ENCODE measurements at regions of chr3 and their contacts with region 1.

Region 1: GRCh38 chr3:184561061-184561912 is at the start of gene EPHB3:
- DNase-seq: peak; percentile 98 to 99
- H3K4me3 ChIP-seq: peak within 1 kb of the TSS; percentile 80
- H3K4me3 Mint-ChIP-seq: peak within 1 kb of the TSS; percentile 47
- H3K27ac Mint-ChIP-seq: no peak within 1 kb of the TSS
- H3K4me1 ChIP-seq: peaks cover 19% of the 10 kb centered on the region
- H3K4me1 Mint-ChIP-seq: peaks cover 24% of the 10 kb centered on the region
- H3K27me3 ChIP-seq: peaks cover 1% of the 10 kb centered on the region; the same call in 1 of the 2 replicates
- H3K27me3 Mint-ChIP-seq: peaks cover 12% of the 10 kb centered on the region
- CTCF ChIP-seq: peak; percentile 97 to 100
- total RNA-seq, gene EPHB3: 5.6 and 6.9 TPM in 2 replicates

Region 2: DNA sequence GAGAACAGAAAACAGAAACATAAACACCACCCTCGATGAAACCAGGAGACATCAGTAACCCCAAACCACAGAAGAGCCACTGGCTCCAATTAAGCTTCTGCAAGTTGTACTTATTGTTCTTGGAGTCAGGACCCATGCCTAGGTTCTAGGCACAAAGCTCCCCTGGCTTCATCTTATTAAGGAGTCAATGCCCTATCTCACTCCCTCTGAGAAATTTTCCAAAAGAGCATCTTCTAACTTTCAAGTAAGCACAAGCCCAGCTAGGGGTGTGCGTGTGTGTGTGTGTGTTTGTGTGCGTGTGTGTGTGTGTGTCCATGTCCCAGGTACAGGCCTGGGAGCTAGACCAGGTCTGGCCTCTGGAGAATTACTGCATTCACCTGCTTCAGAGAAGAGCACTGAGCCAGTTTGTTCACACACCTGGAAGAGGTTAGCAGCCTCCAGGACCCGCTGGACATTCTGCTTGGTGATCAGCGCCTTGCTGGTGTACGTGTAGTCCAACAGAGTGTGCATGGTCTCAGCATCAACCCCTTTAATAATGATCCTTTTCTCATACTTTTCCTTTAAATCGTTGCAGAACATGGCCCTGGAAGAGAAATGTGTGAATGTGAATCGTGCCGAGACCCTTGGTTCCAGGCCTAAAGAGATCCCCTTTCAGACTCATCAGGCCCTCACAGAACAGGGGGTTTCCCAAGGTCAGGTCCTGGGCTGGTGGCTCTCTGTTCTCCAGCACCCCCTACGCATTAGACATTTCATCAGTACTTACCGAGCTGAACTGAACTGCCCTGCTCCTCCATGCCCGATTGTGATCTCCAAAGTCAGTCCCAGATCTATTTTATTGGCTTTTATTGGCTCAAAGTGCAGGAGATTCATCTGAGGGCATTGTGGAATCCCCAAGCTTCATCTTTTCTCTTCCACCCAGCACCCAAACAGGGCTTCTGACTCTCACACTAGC is 1033.6 kb before region 1 on chr3:
- CTCF ChIA-PET with region 1: no interaction called
- POLR2A ChIA-PET with region 1: no interaction called
- intact Hi-C with region 1: no loop called
- DNase-seq: no peak
- H3K4me3 ChIP-seq: no peak overlapping the region
- H3K4me3 Mint-ChIP-seq: no peak overlapping the region
- H3K27ac Mint-ChIP-seq: peak overlapping the region; percentile 53
- H3K4me1 ChIP-seq: peaks cover 4% of the 10 kb centered on the region
- H3K4me1 Mint-ChIP-seq: peaks cover 5% of the 10 kb centered on the region
- H3K27me3 ChIP-seq: no peaks in the 10 kb centered on the region
- H3K27me3 Mint-ChIP-seq: no peaks in the 10 kb centered on the region
- CTCF ChIP-seq: no peak

Region 3: DNA sequence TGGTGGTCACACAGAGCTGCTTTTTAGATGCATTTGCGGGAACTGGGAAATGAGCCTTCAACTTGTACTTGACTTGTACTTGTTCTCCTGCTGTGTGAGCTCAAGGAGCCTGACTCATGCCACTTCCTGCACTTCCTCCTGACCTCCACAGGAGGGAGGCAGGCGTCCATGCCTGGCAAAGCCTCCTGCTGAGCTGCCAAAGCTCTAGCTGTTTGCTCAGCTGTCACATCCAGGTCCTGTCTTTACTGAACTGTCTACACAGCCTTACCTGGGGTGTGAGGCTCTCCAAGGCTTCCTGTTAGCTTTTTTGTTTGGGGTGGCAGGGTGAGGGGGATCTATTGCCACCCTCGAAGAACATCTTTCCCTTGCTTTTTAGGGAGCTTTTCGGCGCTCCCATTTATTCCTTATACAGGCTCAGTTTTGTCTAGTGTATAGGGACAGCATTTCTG is 189.7 kb before region 1 on chr3:
- CTCF ChIA-PET with region 1: interaction called, 22 read pairs
- POLR2A ChIA-PET with region 1: interaction called, 4 read pairs
- intact Hi-C with region 1: no loop called
- DNase-seq: peak; percentile 85 to 88
- H3K4me3 ChIP-seq: no peak overlapping the region
- H3K4me3 Mint-ChIP-seq: no peak overlapping the region
- H3K27ac Mint-ChIP-seq: no peak overlapping the region
- H3K4me1 ChIP-seq: no peaks in the 10 kb centered on the region
- H3K4me1 Mint-ChIP-seq: peaks cover 7% of the 10 kb centered on the region
- H3K27me3 ChIP-seq: no peaks in the 10 kb centered on the region
- H3K27me3 Mint-ChIP-seq: no peaks in the 10 kb centered on the region
- CTCF ChIP-seq: peak; percentile 95 to 99

Region 4: GRCh38 chr3:184727357-184728009 is 166.2 kb after region 1 on chr3:
- CTCF ChIA-PET with region 1: interaction called, 18 read pairs
- POLR2A ChIA-PET with region 1: no interaction called
- intact Hi-C with region 1: loop called (anchors 1 kb)
- DNase-seq: peak; percentile 73 to 78
- H3K4me3 ChIP-seq: no peak overlapping the region
- H3K4me3 Mint-ChIP-seq: no peak overlapping the region
- H3K27ac Mint-ChIP-seq: no peak overlapping the region
- H3K4me1 ChIP-seq: peaks cover 5% of the 10 kb centered on the region; the same call in 1 of the 2 replicates
- H3K4me1 Mint-ChIP-seq: no peaks in the 10 kb centered on the region
- H3K27me3 ChIP-seq: no peaks in the 10 kb centered on the region
- H3K27me3 Mint-ChIP-seq: no peaks in the 10 kb centered on the region
- CTCF ChIP-seq: peak; percentile 44 to 88

Region 5: DNA sequence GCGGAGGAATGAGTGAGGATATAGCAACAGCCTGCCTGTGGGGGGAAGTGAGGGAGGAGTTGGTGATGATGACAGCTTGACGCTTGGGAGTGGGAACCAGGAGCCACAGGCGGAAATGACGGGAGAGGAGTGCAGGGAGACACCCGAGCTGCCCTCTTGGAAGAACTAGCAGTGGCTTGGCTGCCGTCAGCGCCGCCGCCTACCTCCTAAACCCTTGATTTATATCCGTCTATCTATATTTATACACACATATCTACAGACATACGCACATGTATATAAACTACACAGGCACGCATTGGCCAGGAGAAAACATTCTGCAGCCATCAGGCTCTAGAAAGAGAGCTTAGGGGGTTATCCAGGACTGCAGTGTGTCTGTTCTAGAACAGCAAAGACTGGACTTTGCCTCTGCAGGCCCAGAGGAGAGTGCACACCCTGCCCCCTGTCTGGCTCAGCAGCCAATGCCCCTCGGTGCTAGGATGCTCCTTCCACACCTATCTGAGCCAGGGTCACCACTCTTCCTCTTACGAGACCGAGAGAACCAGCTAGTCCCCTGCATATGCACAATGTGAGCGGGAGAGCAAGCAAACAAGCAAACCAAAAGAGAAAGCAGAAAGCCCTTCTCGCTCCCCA is 195.8 kb after region 1 on chr3:
- CTCF ChIA-PET with region 1: interaction called, 17 read pairs
- POLR2A ChIA-PET with region 1: no interaction called
- intact Hi-C with region 1: no loop called
- DNase-seq: no peak
- H3K4me3 ChIP-seq: no peak overlapping the region
- H3K4me3 Mint-ChIP-seq: no peak overlapping the region
- H3K27ac Mint-ChIP-seq: no peak overlapping the region
- H3K4me1 ChIP-seq: peaks cover 5% of the 10 kb centered on the region; the same call in 1 of the 2 replicates
- H3K4me1 Mint-ChIP-seq: peaks cover 8% of the 10 kb centered on the region
- H3K27me3 ChIP-seq: no peaks in the 10 kb centered on the region
- H3K27me3 Mint-ChIP-seq: no peaks in the 10 kb centered on the region
- CTCF ChIP-seq: no peak

Region 6: DNA sequence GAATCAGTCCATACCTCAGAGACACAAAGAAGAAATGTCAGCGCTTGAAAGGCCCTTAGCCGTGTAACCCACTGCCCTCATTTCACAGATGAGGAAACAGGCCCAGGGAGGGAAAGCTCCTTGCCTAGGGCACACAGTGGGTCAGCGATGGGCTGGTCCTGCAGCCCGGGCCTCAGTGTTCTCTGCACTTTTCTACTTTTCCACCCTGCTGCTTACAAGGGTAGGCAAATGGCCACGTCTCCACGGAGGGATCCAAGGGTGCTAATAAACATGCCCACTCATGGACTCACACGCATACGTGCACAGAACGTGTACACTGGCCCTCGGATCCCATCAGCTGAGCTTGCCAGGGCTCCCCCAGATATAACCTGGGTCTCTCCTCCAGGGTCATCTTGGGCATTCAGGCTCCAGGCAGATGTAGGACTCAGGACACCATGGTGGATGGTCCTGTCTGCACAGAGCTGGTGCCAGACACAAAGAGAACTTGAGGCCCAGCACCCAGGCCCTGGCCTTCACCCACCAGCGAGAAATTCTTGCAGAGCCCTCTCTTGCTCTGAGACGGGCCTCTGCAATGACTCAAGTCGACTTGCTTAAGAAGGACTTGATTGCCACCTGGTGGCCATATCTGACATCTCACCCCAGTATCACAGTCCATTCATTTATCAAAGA is 216.2 kb after region 1 on chr3:
- CTCF ChIA-PET with region 1: interaction called, 4 read pairs
- POLR2A ChIA-PET with region 1: no interaction called
- intact Hi-C with region 1: loop called (anchors 1 kb)
- DNase-seq: peak; percentile 85 to 92
- H3K4me3 ChIP-seq: no peak overlapping the region
- H3K4me3 Mint-ChIP-seq: no peak overlapping the region
- H3K27ac Mint-ChIP-seq: no peak overlapping the region
- H3K4me1 ChIP-seq: no peaks in the 10 kb centered on the region
- H3K4me1 Mint-ChIP-seq: peaks cover 6% of the 10 kb centered on the region
- H3K27me3 ChIP-seq: no peaks in the 10 kb centered on the region
- H3K27me3 Mint-ChIP-seq: peaks cover 3% of the 10 kb centered on the region
- CTCF ChIP-seq: peak; percentile 61 to 81

Region 7: GRCh38 chr3:184808021-184808420 is 246.7 kb after region 1 on chr3:
- CTCF ChIA-PET with region 1: interaction called, 3 read pairs
- POLR2A ChIA-PET with region 1: no interaction called
- intact Hi-C with region 1: loop called (anchors 1 kb)
- DNase-seq: no peak
- H3K4me3 ChIP-seq: no peak overlapping the region
- H3K4me3 Mint-ChIP-seq: no peak overlapping the region
- H3K27ac Mint-ChIP-seq: no peak overlapping the region
- H3K4me1 ChIP-seq: peaks cover 9% of the 10 kb centered on the region
- H3K4me1 Mint-ChIP-seq: peaks cover 26% of the 10 kb centered on the region
- H3K27me3 ChIP-seq: no peaks in the 10 kb centered on the region
- H3K27me3 Mint-ChIP-seq: no peaks in the 10 kb centered on the region
- CTCF ChIP-seq: no peak

Measured in Caco-2 (cell line).